CD8-positive, alpha-beta T cell (primary cell): ENCODE measurements at regions of chr12 and their contacts with region 1.

Region 1: DNA sequence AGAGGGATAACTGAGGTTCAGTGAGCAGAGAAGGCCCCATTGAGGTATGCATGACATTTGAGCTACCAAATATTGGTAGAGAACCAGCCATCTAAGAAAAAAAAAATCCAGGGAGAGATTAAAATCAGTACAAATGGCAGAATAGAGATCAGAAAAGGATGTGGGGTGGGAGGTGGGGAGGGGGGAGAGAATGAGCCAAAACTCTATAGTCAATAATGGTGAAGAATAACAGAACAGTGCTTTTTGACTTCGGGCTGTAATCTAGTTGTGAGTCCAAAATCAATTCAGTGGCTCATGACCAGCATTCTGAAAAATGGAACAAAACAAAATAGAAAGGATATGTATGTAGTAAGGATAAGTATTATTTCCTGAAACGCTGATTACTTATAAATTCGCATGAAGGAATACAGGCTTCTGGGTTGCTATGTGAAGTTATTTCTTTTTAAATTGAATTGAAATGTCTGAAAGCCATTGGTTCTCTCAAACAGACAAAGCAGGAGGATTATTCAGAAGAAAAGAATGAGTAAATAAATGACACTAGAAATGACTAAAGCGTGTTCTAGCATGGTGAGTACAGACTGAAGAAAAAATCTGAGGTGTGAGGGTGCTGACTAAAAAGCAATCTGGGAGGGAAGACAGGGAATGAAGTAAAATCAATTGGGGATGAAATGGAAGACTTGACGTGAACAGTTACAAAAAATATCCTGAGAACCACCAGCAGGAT is 72.4 kb downstream of the ATP2B1 start:
- DNase-seq: no peak
- ATAC-seq: no peak
- H3K4me3 ChIP-seq: no peak overlapping the region
- H3K4me3 Mint-ChIP-seq: no peak overlapping the region
- H3K27ac ChIP-seq: no peak overlapping the region
- H3K27ac Mint-ChIP-seq: peak overlapping the region; percentile 55
- H3K4me1 ChIP-seq: no peaks in the 10 kb centered on the region
- H3K4me1 Mint-ChIP-seq: peaks cover 21% of the 10 kb centered on the region
- H3K27me3 ChIP-seq: no peaks in the 10 kb centered on the region
- H3K27me3 Mint-ChIP-seq: no peaks in the 10 kb centered on the region
- CTCF ChIP-seq: no peak

Region 2: GRCh38 chr12:89319122-89319521 is 317.1 kb before region 1 on chr12:
- CTCF ChIA-PET with region 1: no interaction called
- POLR2A ChIA-PET with region 1: no interaction called
- intact Hi-C with region 1: no loop called
- DNase-seq: no peak
- ATAC-seq: no peak
- H3K4me3 ChIP-seq: no peak overlapping the region
- H3K4me3 Mint-ChIP-seq: no peak overlapping the region
- H3K27ac ChIP-seq: no peak overlapping the region
- H3K27ac Mint-ChIP-seq: no peak overlapping the region
- H3K4me1 ChIP-seq: no peaks in the 10 kb centered on the region
- H3K4me1 Mint-ChIP-seq: no peaks in the 10 kb centered on the region
- H3K27me3 ChIP-seq: no peaks in the 10 kb centered on the region
- H3K27me3 Mint-ChIP-seq: no peaks in the 10 kb centered on the region
- CTCF ChIP-seq: no peak

Region 3: DNA sequence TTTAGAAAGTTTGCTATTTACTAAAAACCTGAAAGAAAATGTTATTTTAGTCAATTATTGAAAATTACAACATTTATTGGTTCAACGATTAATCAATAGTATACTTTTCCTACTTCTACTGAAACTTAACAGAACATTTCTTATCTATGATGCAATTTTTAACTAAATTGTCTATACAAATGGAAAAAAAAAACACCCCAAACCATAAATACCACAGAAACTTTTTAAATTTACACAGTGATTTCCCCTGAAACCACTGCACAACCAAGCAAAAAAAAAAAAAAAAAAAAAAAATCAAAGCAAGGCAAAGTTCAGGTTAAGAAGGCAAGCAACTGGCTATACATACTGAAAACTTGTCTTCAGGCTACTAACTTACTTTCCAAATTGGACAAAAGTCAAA is 38.4 kb before region 1 on chr12:
- CTCF ChIA-PET with region 1: no interaction called
- POLR2A ChIA-PET with region 1: no interaction called
- intact Hi-C with region 1: loop called in 1 of 2 experiments (anchors 5 kb)
- DNase-seq: peak in 1 of 9 experiments; percentile 24
- ATAC-seq: no peak
- H3K4me3 ChIP-seq: no peak overlapping the region
- H3K4me3 Mint-ChIP-seq: no peak overlapping the region
- H3K27ac ChIP-seq: no peak overlapping the region
- H3K27ac Mint-ChIP-seq: no peak overlapping the region
- H3K4me1 ChIP-seq: peaks cover 6% of the 10 kb centered on the region
- H3K4me1 Mint-ChIP-seq: peaks cover 14% of the 10 kb centered on the region
- H3K27me3 ChIP-seq: no peaks in the 10 kb centered on the region
- H3K27me3 Mint-ChIP-seq: no peaks in the 10 kb centered on the region
- CTCF ChIP-seq: no peak

Region 4: DNA sequence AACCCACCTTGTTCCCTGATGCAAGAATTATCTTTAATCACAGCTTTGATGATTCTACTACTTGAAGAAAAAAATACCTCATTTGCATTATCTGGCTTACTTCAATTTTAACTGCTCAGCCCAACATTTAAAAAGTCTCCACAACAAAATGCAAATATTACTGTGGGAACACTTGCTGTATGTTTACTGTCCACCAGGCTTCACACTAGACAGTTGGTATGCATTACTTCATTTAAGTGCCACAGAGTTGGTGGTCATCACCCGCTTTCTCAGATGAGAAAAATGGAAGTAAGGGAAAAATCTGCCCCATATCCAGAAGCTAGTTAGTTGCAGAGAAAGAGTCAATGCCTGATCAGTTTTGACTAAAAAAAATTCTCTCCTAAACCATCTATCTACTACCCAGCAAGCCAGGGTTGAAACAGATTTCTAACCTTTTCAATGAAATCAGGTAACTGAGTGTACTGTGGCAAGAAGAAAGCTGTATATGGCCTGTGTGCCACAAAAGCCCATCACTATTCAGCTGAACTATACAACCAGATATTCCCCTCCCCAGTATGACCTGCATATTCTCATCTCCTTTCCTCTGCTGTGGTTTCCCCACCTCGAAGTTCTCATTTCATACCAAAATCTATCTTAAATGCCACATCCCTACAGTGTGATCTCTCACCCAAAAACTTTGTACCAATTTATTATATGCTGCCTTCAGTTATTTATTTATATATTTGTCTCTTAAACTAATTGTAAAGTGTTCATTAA is 17.9 kb before region 1 on chr12:
- CTCF ChIA-PET with region 1: no interaction called
- POLR2A ChIA-PET with region 1: no interaction called
- intact Hi-C with region 1: no loop called
- DNase-seq: peak in 1 of 9 experiments; percentile 22
- ATAC-seq: no peak
- H3K4me3 ChIP-seq: no peak overlapping the region
- H3K4me3 Mint-ChIP-seq: no peak overlapping the region
- H3K27ac ChIP-seq: no peak overlapping the region
- H3K27ac Mint-ChIP-seq: no peak overlapping the region
- H3K4me1 ChIP-seq: no peaks in the 10 kb centered on the region
- H3K4me1 Mint-ChIP-seq: peaks cover 6% of the 10 kb centered on the region
- H3K27me3 ChIP-seq: no peaks in the 10 kb centered on the region
- H3K27me3 Mint-ChIP-seq: no peaks in the 10 kb centered on the region
- CTCF ChIP-seq: no peak

Region 5: GRCh38 chr12:89671469-89671868 is 35.3 kb after region 1 on chr12:
- CTCF ChIA-PET with region 1: no interaction called
- POLR2A ChIA-PET with region 1: no interaction called
- intact Hi-C with region 1: loop called in 1 of 2 experiments (anchors 5 kb)
- DNase-seq: no peak
- ATAC-seq: no peak
- H3K4me3 ChIP-seq: no peak overlapping the region
- H3K4me3 Mint-ChIP-seq: no peak overlapping the region
- H3K27ac ChIP-seq: no peak overlapping the region
- H3K27ac Mint-ChIP-seq: no peak overlapping the region
- H3K4me1 ChIP-seq: peaks cover 39% of the 10 kb centered on the region
- H3K4me1 Mint-ChIP-seq: peaks cover 88% of the 10 kb centered on the region
- H3K27me3 ChIP-seq: no peaks in the 10 kb centered on the region
- H3K27me3 Mint-ChIP-seq: no peaks in the 10 kb centered on the region
- CTCF ChIP-seq: no peak

Region 6: DNA sequence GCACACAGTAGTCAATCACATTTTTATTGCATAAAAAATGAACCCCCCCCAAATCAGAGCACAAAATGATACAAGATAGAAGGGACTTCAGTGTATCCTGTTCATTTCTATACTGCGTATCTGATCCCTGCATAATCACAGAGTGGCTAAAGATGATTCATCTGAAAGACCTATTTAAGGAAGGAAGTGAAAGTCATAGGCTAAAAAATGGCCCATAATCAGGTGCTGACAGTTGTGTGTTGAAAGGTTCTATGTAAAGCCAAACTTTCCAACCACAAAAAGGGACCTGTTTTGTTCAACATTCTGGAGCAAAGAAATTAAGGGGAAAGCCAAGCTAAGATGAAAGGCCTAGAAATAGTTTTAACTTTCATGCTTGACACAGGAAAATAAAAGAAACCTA is 220.2 kb after region 1 on chr12:
- CTCF ChIA-PET with region 1: no interaction called
- POLR2A ChIA-PET with region 1: no interaction called
- intact Hi-C with region 1: loop called in 1 of 2 experiments (anchors 10 kb)
- DNase-seq: peak in 2 of 9 experiments; percentile 19 to 49
- ATAC-seq: peak; percentile 42
- H3K4me3 ChIP-seq: no peak overlapping the region
- H3K4me3 Mint-ChIP-seq: no peak overlapping the region
- H3K27ac ChIP-seq: no peak overlapping the region
- H3K27ac Mint-ChIP-seq: peak overlapping the region; percentile 29
- H3K4me1 ChIP-seq: peaks cover 11% of the 10 kb centered on the region
- H3K4me1 Mint-ChIP-seq: peaks cover 38% of the 10 kb centered on the region
- H3K27me3 ChIP-seq: no peaks in the 10 kb centered on the region
- H3K27me3 Mint-ChIP-seq: no peaks in the 10 kb centered on the region
- CTCF ChIP-seq: no peak